A673 (cell line): ENCODE measurements at regions of chr3 and their contacts with region 1.

Region 1: GRCh38 chr3:8712045-8712910 is 21.3 kb upstream of the CAV3 start:
- DNase-seq: peak; percentile 5
- H3K4me3 ChIP-seq: no peak overlapping the region
- H3K27ac ChIP-seq: no peak overlapping the region
- H3K4me1 ChIP-seq: no peaks in the 10 kb centered on the region
- H3K27me3 ChIP-seq: no peaks in the 10 kb centered on the region
- CTCF ChIP-seq: no peak

Region 2: GRCh38 chr3:9013782-9014563 is 301.7 kb after region 1 on chr3:
- CTCF ChIA-PET with region 1: no interaction called
- POLR2A ChIA-PET with region 1: no interaction called
- intact Hi-C with region 1: no loop called
- DNase-seq: peak; percentile 16
- H3K4me3 ChIP-seq: no peak overlapping the region
- H3K27ac ChIP-seq: no peak overlapping the region
- H3K4me1 ChIP-seq: no peaks in the 10 kb centered on the region
- H3K27me3 ChIP-seq: peaks cover 9% of the 10 kb centered on the region
- CTCF ChIP-seq: 0 out of 2 replicates have a peak, but pooled peaks have one; percentile 25

Region 3: DNA sequence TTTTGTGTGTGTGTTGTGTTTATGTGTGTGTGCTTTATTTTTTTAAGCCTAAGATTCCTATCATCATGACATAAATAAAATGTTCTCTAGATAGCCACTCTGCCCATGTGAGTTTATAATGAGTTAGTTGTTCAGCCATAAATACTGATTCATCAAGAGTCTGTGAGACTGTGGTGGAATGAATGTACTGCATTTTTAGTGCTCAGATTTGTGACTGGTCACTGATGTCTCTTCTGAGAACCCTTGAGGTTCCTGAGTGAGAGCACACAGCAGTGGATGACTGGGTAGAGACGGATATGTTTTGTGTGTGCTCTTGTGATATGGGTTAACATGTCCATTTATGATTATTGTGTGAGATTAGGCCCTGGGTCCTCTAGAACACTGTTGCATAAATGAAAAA is 736.4 kb after region 1 on chr3:
- CTCF ChIA-PET with region 1: no interaction called
- POLR2A ChIA-PET with region 1: interaction called, 15 read pairs
- intact Hi-C with region 1: no loop called
- DNase-seq: no peak
- H3K4me3 ChIP-seq: no peak overlapping the region
- H3K27ac ChIP-seq: no peak overlapping the region
- H3K4me1 ChIP-seq: no peaks in the 10 kb centered on the region
- H3K27me3 ChIP-seq: no peaks in the 10 kb centered on the region
- CTCF ChIP-seq: no peak